ENCODE measurements at regions of chrX and their contacts with region 1.

Region 1: GRCh38 chrX:67543818-67544217 is at the start of gene AR:
- DNase-seq: peak; percentile 39 to 57
- ATAC-seq: peak; percentile 38 to 43
- H3K4me3 ChIP-seq: peak within 1 kb of the TSS; percentile 57 to 72 (median 67)
- H3K27ac ChIP-seq: peak within 1 kb of the TSS; percentile 80 to 88 (median 82)
- H3K4me1 ChIP-seq: no peaks in the 10 kb centered on the region
- H3K27me3 ChIP-seq: peaks cover 0 to 5% (median 0%) of the 10 kb centered on the region in 3 donors
- CTCF ChIP-seq: no peak
- POLR2A ChIP-seq: peak; percentile 27 to 40
- total RNA-seq, gene AR: 6.8 to 9.9 (median 8.2) TPM

Region 2: GRCh38 chrX:67780694-67781109 is 236.9 kb after region 1 on chrX:
- in situ Hi-C with region 1: no loop called
- intact Hi-C with region 1: loop called (anchors 5 kb)
- DNase-seq: peak; percentile 56 to 76
- ATAC-seq: peak; percentile 76 to 78
- H3K4me3 ChIP-seq: peak overlapping the region in 1 of 4 donors; percentile 16
- H3K27ac ChIP-seq: peak overlapping the region; percentile 78 to 88 (median 82)
- H3K4me1 ChIP-seq: peaks cover 34 to 44% of the 10 kb centered on the region in 2 donors
- H3K27me3 ChIP-seq: no peaks in the 10 kb centered on the region
- CTCF ChIP-seq: no peak
- POLR2A ChIP-seq: no peak

Region 3: GRCh38 chrX:68204521-68205038 is 660.8 kb after region 1 on chrX:
- in situ Hi-C with region 1: no loop called
- intact Hi-C with region 1: loop called (anchors 5 kb)
- DNase-seq: no peak
- ATAC-seq: no peak
- H3K4me3 ChIP-seq: no peak overlapping the region
- H3K27ac ChIP-seq: no peak overlapping the region
- H3K4me1 ChIP-seq: no peaks in the 10 kb centered on the region
- H3K27me3 ChIP-seq: no peaks in the 10 kb centered on the region
- CTCF ChIP-seq: no peak
- POLR2A ChIP-seq: no peak

Measured in gastrocnemius medialis (tissue), 4 donors.